Activated CD4-positive, alpha-beta T cell treated with anti-CD3 and anti-CD28 coated beads, Interleukin-2, amount 10 ng/mL, durations not matched to agents 24 days and 14 days (primary cell): ENCODE measurements at regions of chr2 and their contacts with region 1.

Region 1: DNA sequence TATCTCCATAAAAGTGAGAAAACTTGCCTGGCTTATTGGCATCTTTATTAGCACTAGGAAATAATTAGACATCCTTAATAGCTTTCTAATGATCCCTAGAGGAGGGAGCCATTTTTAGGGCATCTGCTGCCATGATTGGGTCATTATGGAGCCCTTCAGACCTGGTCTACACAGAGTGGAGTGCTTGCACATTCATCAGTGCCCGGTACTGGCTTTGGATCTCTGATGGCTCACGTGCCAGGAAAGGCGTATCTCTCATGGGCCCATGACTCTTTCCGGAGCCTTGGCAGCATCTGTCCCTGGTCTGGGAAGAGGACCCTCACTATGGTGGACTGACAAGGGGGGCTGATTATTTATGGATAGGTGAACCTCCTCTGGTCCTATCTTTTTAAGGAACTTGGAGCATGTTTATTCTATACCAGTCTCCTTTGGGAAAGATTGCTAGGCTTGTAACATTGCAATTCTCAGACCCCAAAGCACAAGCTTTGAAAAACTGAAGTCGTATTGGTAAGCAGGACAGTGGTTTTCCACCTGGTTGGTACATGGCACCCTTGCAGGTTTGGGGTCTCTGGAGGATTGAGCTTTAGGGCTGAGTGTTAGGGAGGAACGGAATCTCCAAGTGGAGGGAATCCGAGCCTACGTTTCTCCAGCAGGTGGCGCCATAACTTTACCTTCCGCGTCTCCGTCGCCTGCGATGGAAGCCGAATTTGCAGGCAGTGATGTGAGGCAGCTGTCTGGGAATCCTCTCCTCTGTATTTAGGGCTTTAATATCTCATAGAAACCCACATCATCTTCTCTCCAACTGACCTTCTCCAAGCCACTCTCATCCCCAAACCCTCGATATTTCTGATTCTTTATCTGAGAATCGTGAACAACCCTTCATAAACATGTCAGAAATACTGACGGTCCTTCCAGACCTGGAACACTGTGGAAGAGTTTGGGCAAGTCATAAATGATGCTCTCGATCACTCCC is 27.8 kb downstream of the SIX2 start:
- DNase-seq: peak; percentile 89
- H3K4me3 Mint-ChIP-seq: no peak overlapping the region
- H3K27ac Mint-ChIP-seq: no peak overlapping the region
- H3K4me1 Mint-ChIP-seq: peaks cover 4% of the 10 kb centered on the region
- H3K27me3 Mint-ChIP-seq: peaks cover 13% of the 10 kb centered on the region

Region 2: GRCh38 chr2:45275242-45275805 is 293.9 kb after region 1 on chr2:
- intact Hi-C with region 1: no loop called
- DNase-seq: no peak
- H3K4me3 Mint-ChIP-seq: no peak overlapping the region
- H3K27ac Mint-ChIP-seq: no peak overlapping the region
- H3K4me1 Mint-ChIP-seq: peaks cover 1% of the 10 kb centered on the region
- H3K27me3 Mint-ChIP-seq: peaks cover 6% of the 10 kb centered on the region

Region 3: GRCh38 chr2:45494269-45494977 is 513.0 kb after region 1 on chr2:
- intact Hi-C with region 1: loop called (anchors 1 kb)
- DNase-seq: peak; percentile 70
- H3K4me3 Mint-ChIP-seq: no peak overlapping the region
- H3K27ac Mint-ChIP-seq: no peak overlapping the region
- H3K4me1 Mint-ChIP-seq: peaks cover 22% of the 10 kb centered on the region
- H3K27me3 Mint-ChIP-seq: no peaks in the 10 kb centered on the region

Region 4: GRCh38 chr2:45578056-45578809 is 596.8 kb after region 1 on chr2:
- intact Hi-C with region 1: loop called (anchors 1 kb)
- DNase-seq: peak; percentile 67
- H3K4me3 Mint-ChIP-seq: no peak overlapping the region
- H3K27ac Mint-ChIP-seq: no peak overlapping the region
- H3K4me1 Mint-ChIP-seq: peaks cover 6% of the 10 kb centered on the region
- H3K27me3 Mint-ChIP-seq: no peaks in the 10 kb centered on the region